CD4-positive, alpha-beta memory T cell (primary cell): ENCODE measurements at regions of chr2 and their contacts with region 1.

Region 1: GRCh38 chr2:38665854-38666555 is at the start of gene GALM:
- DNase-seq: peak; percentile 51 to 68 (median 62)
- H3K4me3 ChIP-seq: peak within 1 kb of the TSS; percentile 63 to 74
- H3K4me3 Mint-ChIP-seq: peak within 1 kb of the TSS; percentile 81 to 97 (median 94)
- H3K27ac ChIP-seq: peak within 1 kb of the TSS; percentile 73
- H3K27ac Mint-ChIP-seq: peak within 1 kb of the TSS; percentile 93 to 100 (median 98)
- H3K4me1 ChIP-seq: peaks cover 73% of the 10 kb centered on the region
- H3K4me1 Mint-ChIP-seq: peaks cover 47 to 80% (median 64%) of the 10 kb centered on the region in 4 donors
- H3K27me3 ChIP-seq: no peaks in the 10 kb centered on the region
- H3K27me3 Mint-ChIP-seq: no peaks in the 10 kb centered on the region
- total RNA-seq, gene GALM: 35.5 to 35.8 TPM

Region 2: GRCh38 chr2:37997629-37998028 is 668.4 kb before region 1 on chr2:
- CTCF ChIA-PET with region 1: no interaction called
- POLR2A ChIA-PET with region 1: no interaction called
- intact Hi-C with region 1: no loop called
- DNase-seq: no peak
- H3K4me3 ChIP-seq: no peak overlapping the region
- H3K4me3 Mint-ChIP-seq: no peak overlapping the region
- H3K27ac ChIP-seq: no peak overlapping the region
- H3K27ac Mint-ChIP-seq: peak overlapping the region in 1 of 7 donors; percentile 32
- H3K4me1 ChIP-seq: no peaks in the 10 kb centered on the region
- H3K4me1 Mint-ChIP-seq: no peaks in the 10 kb centered on the region
- H3K27me3 ChIP-seq: no peaks in the 10 kb centered on the region
- H3K27me3 Mint-ChIP-seq: no peaks in the 10 kb centered on the region

Region 3: GRCh38 chr2:38596229-38596628 is 69.8 kb before region 1 on chr2:
- CTCF ChIA-PET with region 1: interaction called, 99 read pairs
- POLR2A ChIA-PET with region 1: interaction called, 227 read pairs
- intact Hi-C with region 1: no loop called
- DNase-seq: peak in 2 of 5 donors; percentile 11 to 42
- H3K4me3 ChIP-seq: peak overlapping the region; percentile 19 to 40
- H3K4me3 Mint-ChIP-seq: peak overlapping the region; percentile 73 to 98 (median 97)
- H3K27ac ChIP-seq: peak overlapping the region; percentile 13
- H3K27ac Mint-ChIP-seq: peak overlapping the region; percentile 81 to 97 (median 92)
- H3K4me1 ChIP-seq: peaks cover 78% of the 10 kb centered on the region
- H3K4me1 Mint-ChIP-seq: peaks cover 38 to 72% (median 55%) of the 10 kb centered on the region in 4 donors
- H3K27me3 ChIP-seq: no peaks in the 10 kb centered on the region
- H3K27me3 Mint-ChIP-seq: no peaks in the 10 kb centered on the region

Region 4: DNA sequence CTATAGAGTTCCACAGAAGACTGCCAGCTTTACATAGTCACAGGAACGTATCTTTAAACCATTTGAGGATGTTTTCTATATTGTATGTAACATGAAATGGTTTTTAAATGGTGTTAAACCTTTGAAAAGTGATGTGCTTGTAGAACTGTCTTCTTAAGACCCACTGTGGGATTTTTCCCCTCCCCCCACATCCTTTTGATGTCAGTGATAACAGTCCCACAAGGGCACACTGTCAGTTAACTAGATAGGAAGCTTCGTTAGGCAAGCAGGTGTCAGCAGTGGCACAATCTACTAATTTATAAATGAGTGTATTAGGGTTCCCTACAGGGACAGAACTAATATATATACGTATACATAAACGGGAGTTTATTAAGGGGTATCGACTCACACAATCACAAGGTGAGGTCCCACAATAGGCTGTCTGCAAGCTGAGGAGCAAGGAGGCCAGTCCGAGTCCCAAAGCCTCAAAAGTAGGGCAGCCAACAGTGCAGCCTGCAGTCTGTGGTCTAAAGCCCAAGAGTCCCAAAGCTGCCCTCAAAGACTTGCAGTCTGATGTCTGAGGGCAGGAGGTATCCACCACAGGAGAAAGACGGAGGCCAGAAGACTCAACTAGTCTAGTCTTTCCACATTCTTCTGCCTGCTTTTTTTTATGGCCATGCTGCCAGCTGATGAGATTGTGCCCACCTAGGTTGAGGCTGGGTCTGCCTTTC is 39.5 kb before region 1 on chr2:
- CTCF ChIA-PET with region 1: interaction called, 25 read pairs
- POLR2A ChIA-PET with region 1: interaction called, 48 read pairs
- intact Hi-C with region 1: loop called (anchors 1 kb)
- DNase-seq: peak; percentile 56 to 71 (median 64)
- H3K4me3 ChIP-seq: no peak overlapping the region
- H3K4me3 Mint-ChIP-seq: peak overlapping the region in 7 of 8 donors; percentile 22 to 70 (median 57)
- H3K27ac ChIP-seq: peak overlapping the region; percentile 7
- H3K27ac Mint-ChIP-seq: peak overlapping the region; percentile 43 to 89 (median 82)
- H3K4me1 ChIP-seq: peaks cover 21% of the 10 kb centered on the region
- H3K4me1 Mint-ChIP-seq: peaks cover 20 to 29% (median 26%) of the 10 kb centered on the region in 4 donors
- H3K27me3 ChIP-seq: no peaks in the 10 kb centered on the region
- H3K27me3 Mint-ChIP-seq: no peaks in the 10 kb centered on the region

Region 5: DNA sequence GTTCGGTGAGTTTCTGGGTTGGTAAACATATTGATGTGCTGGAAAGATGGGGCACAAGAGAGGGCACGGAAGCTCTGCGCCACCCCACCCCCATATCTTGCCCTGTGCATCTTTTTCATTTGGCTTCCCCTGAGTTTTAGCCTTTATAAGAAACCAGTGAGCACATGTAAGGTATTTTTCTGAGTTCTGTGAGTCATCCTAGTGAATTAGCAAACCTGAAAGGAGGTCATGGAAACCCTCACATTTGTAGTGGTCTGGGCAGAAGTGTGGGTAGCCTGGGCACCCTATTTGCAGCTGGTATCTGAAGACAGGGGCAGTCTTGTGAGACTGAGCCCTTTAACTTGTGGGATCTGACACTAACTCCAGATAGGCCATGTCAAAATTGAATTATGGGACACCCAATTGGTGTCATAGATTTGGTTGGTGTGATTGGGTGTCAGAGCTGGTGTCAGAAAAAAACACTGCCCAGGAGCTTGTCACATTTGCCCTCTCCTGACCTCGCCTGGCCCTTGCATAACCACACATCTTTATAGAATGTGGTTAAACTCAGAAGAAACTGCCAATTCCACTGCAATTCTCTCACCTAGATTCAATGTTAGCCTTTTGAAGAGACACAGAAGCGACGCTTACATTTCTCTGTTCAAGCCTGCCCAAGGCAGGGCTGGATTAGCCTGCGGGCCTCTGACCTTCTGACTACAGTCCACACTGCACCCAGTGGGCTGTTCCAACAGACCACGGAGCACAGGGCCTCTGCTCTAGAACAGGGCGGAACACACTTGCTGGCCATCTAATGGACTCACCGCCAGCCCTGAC is 12.1 kb before region 1 on chr2:
- CTCF ChIA-PET with region 1: interaction called, 48 read pairs
- POLR2A ChIA-PET with region 1: interaction called, 164 read pairs
- intact Hi-C with region 1: loop called (anchors 1 kb)
- DNase-seq: peak; percentile 66 to 82 (median 70)
- H3K4me3 ChIP-seq: peak overlapping the region in 1 of 2 donors; percentile 18
- H3K4me3 Mint-ChIP-seq: peak overlapping the region in 7 of 8 donors; percentile 61 to 87 (median 80)
- H3K27ac ChIP-seq: peak overlapping the region; percentile 51
- H3K27ac Mint-ChIP-seq: peak overlapping the region; percentile 87 to 97 (median 97)
- H3K4me1 ChIP-seq: peaks cover 56% of the 10 kb centered on the region
- H3K4me1 Mint-ChIP-seq: peaks cover 32 to 71% (median 50%) of the 10 kb centered on the region in 4 donors
- H3K27me3 ChIP-seq: no peaks in the 10 kb centered on the region
- H3K27me3 Mint-ChIP-seq: no peaks in the 10 kb centered on the region

Region 6: DNA sequence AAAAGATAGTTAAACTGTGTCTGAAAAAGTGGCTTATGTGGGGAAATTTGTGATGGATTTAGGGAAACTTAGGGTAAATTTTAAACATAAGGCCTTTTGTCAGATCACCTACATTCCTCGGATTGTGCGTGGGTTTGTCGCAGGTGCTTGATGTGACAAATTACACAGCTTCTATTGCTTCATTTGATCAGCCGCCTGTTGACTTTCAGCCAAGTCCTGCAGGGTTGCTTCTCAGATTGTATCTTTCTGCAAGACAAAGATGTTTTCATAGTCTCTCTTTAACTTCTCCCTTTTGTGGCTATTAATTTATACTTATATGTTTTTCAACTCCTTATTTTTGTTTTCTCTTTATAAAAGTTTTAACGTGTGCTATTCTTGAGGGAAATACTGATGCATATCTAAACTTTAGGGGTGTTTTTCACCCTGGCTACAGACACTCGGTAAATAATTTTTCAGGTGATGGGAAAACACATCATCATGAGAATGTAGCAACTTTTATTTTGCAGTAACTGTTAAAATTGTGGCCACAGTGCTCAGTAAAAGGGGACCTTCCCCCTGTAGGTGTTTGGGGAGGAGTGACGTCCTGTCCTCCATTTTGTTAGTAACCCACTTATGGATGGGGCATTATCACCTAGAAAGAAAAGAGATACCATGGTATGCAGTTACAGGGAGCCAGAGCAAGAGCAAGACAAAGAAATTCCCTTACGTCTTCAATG is 31.3 kb after region 1 on chr2:
- CTCF ChIA-PET with region 1: interaction called, 4 read pairs
- POLR2A ChIA-PET with region 1: interaction called, 27 read pairs
- intact Hi-C with region 1: loop called (anchors 1 kb)
- DNase-seq: peak; percentile 74 to 87 (median 75)
- H3K4me3 ChIP-seq: peak overlapping the region in 1 of 2 donors; percentile 0
- H3K4me3 Mint-ChIP-seq: peak overlapping the region; percentile 43 to 81 (median 76)
- H3K27ac ChIP-seq: peak overlapping the region; percentile 72
- H3K27ac Mint-ChIP-seq: peak overlapping the region; percentile 93 to 98 (median 97)
- H3K4me1 ChIP-seq: peaks cover 100% of the 10 kb centered on the region
- H3K4me1 Mint-ChIP-seq: peaks cover 52 to 92% (median 74%) of the 10 kb centered on the region in 4 donors
- H3K27me3 ChIP-seq: no peaks in the 10 kb centered on the region
- H3K27me3 Mint-ChIP-seq: no peaks in the 10 kb centered on the region

Region 7: DNA sequence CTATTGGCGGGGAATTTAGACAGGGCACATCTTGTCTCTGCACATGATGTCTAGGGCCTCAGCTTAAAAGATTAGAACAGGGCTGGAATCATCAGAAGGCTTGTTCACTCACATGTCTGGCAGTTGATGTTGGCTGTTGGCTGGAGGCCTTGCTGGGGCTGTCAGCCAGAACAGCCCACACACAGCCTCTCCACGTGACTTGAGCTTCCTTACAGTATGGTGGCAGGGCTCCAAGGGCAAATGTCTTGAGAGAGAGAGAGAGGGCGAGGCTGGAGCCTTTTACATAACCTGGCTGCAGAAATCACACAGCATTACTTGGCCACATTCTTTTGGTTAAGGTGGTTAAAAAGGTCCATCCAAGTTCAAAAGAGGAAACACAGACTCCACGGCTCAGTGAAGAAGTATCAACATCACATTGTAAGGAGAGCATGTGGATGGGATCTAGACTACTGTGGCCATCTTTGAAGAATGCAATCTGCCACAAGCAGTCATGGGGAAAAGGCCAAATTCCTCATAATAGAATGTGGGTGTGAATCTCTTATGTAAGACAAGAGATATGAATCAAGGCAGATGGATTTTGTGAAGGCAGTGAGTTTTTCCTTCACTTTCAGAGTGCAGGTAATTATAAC is 54.7 kb after region 1 on chr2:
- CTCF ChIA-PET with region 1: interaction called, 11 read pairs
- POLR2A ChIA-PET with region 1: interaction called, 11 read pairs
- intact Hi-C with region 1: no loop called
- DNase-seq: no peak
- H3K4me3 ChIP-seq: no peak overlapping the region
- H3K4me3 Mint-ChIP-seq: peak overlapping the region in 5 of 8 donors; percentile 22 to 44 (median 29)
- H3K27ac ChIP-seq: no peak overlapping the region
- H3K27ac Mint-ChIP-seq: peak overlapping the region; percentile 75 to 94 (median 89)
- H3K4me1 ChIP-seq: peaks cover 58% of the 10 kb centered on the region
- H3K4me1 Mint-ChIP-seq: peaks cover 39 to 68% (median 54%) of the 10 kb centered on the region in 4 donors
- H3K27me3 ChIP-seq: no peaks in the 10 kb centered on the region
- H3K27me3 Mint-ChIP-seq: no peaks in the 10 kb centered on the region

Region 8: GRCh38 chr2:38960609-38961320 is 294.8 kb after region 1 on chr2:
- CTCF ChIA-PET with region 1: no interaction called
- POLR2A ChIA-PET with region 1: no interaction called
- intact Hi-C with region 1: no loop called
- DNase-seq: no peak
- H3K4me3 ChIP-seq: peak overlapping the region in 1 of 2 donors; percentile 17
- H3K4me3 Mint-ChIP-seq: peak overlapping the region; percentile 11 to 70 (median 60)
- H3K27ac ChIP-seq: no peak overlapping the region
- H3K27ac Mint-ChIP-seq: no peak overlapping the region
- H3K4me1 ChIP-seq: no peaks in the 10 kb centered on the region
- H3K4me1 Mint-ChIP-seq: peaks cover 0 to 10% (median under 1%) of the 10 kb centered on the region in 4 donors
- H3K27me3 ChIP-seq: peaks cover 3% of the 10 kb centered on the region
- H3K27me3 Mint-ChIP-seq: peaks cover 7 to 22% of the 10 kb centered on the region in 2 donors